Heart left ventricle (tissue), 16 donors: ENCODE measurements at regions of chr12 and their contacts with region 1.

Region 1: GRCh38 chr12:11705010-11705409 is 55.5 kb downstream of the ETV6 start:
- DNase-seq: no peak
- ATAC-seq: peak in 3 of 4 donors; percentile 28 to 58 (median 55)
- H3K4me3 ChIP-seq: no peak overlapping the region
- H3K27ac ChIP-seq: peak overlapping the region in 8 of 12 donors; percentile 6 to 79 (median 48)
- H3K4me1 ChIP-seq: peaks cover 0 to 84% (median 45%) of the 10 kb centered on the region in 12 donors
- H3K27me3 ChIP-seq: no peaks in the 10 kb centered on the region
- CTCF ChIP-seq: no peak
- POLR2A ChIP-seq: no peak

Region 2: DNA sequence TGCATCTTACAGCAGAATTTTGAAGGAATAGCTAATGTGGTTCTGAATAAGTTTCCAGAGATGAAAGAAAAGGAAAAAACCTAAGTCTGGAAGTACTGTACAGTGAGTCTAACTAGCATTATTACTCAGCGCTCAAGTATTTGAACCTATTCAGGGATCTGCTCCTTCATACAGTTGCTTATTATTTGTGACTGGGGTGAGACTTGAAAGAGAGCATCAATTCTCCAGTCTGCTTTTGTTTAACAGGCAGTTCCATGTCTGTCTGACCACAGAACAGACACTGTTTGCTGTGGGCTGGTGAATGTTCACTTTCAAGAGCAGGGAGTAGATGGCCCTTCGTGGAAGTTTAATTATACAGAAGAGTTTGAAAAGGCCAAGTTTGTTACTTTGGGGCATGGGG is 46.2 kb before region 1 on chr12:
- intact Hi-C with region 1: loop called in 4 of 10 experiments (anchors 5 kb)
- DNase-seq: no peak
- ATAC-seq: no peak
- H3K4me3 ChIP-seq: no peak overlapping the region
- H3K27ac ChIP-seq: peak overlapping the region in 5 of 12 donors; percentile 6 to 77 (median 7)
- H3K4me1 ChIP-seq: peaks cover 0 to 98% (median 68%) of the 10 kb centered on the region in 12 donors
- H3K27me3 ChIP-seq: no peaks in the 10 kb centered on the region
- CTCF ChIP-seq: no peak
- POLR2A ChIP-seq: no peak

Region 3: DNA sequence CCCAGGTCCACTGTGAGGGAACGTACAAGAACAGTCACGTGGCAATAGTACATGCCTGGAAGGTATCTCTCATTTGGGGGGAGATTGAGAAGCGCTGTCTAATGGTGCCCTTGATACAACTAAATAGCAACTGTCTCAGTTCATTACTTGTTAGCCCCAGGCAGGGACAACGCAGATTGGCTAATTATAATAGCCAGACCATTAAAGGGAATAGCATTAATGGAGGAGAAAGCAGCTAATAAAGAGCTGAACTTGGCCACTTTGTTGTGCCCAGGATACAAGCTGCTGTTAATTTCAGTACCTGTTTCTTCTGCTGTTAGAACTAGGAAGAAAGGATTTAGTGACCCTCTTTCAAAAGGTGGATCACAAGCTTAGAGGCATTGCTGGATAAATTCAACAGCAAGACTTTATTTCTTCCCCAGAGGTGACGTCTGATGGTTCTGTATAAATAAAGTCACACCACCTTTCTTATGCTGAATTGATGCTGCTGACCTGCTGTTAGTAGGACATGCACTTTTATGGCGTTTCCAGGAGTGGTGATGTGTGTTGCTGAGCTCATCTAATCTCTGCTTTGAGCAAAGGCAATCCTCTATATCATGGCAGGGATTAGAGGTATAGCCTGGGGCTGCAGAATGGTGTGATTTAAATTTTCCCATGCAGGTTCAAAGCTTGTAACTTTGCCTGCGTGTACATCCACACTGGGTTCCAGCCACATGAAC is 39.2 kb after region 1 on chr12:
- intact Hi-C with region 1: no loop called
- DNase-seq: no peak
- ATAC-seq: no peak
- H3K4me3 ChIP-seq: no peak overlapping the region
- H3K27ac ChIP-seq: peak overlapping the region in 2 of 12 donors; percentile 39 to 78
- H3K4me1 ChIP-seq: peaks cover 0 to 86% (median 18%) of the 10 kb centered on the region in 12 donors
- H3K27me3 ChIP-seq: no peaks in the 10 kb centered on the region
- CTCF ChIP-seq: no peak
- POLR2A ChIP-seq: no peak

Region 4: GRCh38 chr12:11758510-11759493 is 53.8 kb after region 1 on chr12:
- intact Hi-C with region 1: loop called in 1 of 10 experiments (anchors 10 kb)
- DNase-seq: peak in 4 of 5 donors; percentile 52 to 68 (median 60)
- ATAC-seq: peak; percentile 65 to 83 (median 81)
- H3K4me3 ChIP-seq: peak overlapping the region in 2 of 12 donors; percentile 1 to 7
- H3K27ac ChIP-seq: peak overlapping the region; percentile 37 to 93 (median 86)
- H3K4me1 ChIP-seq: peaks cover 5 to 94% (median 74%) of the 10 kb centered on the region in 12 donors
- H3K27me3 ChIP-seq: no peaks in the 10 kb centered on the region
- CTCF ChIP-seq: no peak
- POLR2A ChIP-seq: no peak